ENCODE measurements at regions of chr17 and their contacts with region 1.

Region 1: DNA sequence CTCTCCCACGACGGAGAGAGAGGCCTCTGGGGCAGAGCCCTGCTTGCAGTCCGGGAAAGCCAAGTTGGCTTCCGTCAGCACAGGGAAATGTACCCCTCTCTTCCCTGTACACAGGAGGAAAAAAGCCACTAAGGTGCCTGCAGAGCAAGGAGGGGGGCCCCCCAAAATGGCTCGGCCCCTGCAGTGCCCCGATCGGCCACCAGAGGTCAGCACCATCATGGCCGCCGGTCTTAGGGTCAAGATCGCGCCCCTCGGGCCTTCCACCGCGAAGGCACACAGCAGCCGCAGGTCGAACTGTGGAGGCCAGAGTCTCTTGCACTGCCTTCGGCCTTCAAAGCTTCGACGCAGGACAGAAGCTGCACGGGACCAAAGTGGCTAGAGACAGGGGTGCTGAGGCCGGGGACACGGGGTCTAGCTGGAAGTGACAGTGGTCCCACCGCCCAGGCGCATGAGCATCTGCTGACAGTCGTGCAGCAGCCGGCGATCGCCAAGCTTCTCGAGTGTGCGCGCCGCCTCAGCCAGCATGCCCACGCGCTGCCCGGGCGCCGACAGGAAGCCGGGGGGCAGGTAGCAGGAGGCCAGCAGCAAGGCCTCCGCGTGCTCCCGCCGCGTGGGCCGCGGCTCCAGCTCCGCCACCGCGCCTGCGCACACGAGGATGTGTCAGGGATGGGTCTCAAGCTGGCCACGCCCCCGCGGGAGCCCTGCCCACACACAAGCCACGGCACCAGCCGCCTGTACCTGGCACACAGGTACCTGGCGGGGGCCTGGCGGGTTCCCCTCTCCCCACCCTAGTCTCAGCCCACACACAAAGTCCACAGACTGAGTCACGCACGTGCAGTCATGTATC is 24.4 kb downstream of the SREBF1 start:
- DNase-seq: peak; percentile 45 to 64 (median 61)
- H3K4me3 ChIP-seq: no peak overlapping the region
- H3K27ac ChIP-seq: no peak overlapping the region
- H3K4me1 ChIP-seq: peaks cover 0 to 10% (median 5%) of the 10 kb centered on the region in 4 experiments
- H3K27me3 ChIP-seq: no peaks in the 10 kb centered on the region

Region 2: DNA sequence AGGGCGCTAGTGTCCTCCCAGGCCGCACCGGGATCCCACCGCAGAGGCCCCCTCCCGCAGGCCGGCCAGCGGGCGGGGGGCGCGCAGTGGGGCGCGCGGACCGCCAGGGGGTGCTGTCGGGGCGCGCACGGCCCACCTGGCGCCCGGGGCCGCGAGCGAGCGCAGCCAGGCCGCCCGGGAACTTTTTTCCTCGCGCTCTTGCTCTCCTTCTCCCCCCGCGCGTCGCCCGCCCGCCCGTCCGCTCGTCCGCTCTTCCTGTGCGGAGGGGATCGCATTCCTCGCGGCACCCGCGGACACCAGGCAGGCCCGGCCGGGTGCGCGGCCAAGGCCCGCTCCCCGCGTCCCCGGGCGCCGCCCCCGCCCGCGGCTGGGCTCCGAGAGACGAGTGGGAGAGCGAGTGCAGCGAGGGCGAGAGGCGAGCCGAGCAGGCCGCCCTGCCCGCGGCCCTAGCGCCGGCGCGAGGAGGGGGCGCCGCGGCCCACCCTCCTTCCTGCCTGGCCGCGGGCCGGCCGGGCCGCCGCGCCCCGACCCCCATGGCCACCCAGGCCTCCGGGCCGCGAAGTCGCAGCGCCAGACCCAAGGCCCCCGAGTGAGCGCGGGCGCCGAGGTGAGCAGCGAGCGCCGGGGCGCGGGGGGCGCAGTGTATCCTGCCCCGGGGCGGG is 131.1 kb before region 1 on chr17 and contains the start of gene RAI1:
- CTCF ChIA-PET with region 1: interaction called, 12 read pairs
- POLR2A ChIA-PET with region 1: interaction called, 3 read pairs
- DNase-seq: peak; percentile 73 to 86 (median 83)
- H3K4me3 ChIP-seq: peak within 1 kb of the TSS; percentile 56 to 81 (median 77)
- H3K27ac ChIP-seq: peak within 1 kb of the TSS; percentile 70 to 89
- H3K4me1 ChIP-seq: peaks cover 0 to 57% (median 38%) of the 10 kb centered on the region in 4 experiments
- H3K27me3 ChIP-seq: no peaks in the 10 kb centered on the region

Region 3: DNA sequence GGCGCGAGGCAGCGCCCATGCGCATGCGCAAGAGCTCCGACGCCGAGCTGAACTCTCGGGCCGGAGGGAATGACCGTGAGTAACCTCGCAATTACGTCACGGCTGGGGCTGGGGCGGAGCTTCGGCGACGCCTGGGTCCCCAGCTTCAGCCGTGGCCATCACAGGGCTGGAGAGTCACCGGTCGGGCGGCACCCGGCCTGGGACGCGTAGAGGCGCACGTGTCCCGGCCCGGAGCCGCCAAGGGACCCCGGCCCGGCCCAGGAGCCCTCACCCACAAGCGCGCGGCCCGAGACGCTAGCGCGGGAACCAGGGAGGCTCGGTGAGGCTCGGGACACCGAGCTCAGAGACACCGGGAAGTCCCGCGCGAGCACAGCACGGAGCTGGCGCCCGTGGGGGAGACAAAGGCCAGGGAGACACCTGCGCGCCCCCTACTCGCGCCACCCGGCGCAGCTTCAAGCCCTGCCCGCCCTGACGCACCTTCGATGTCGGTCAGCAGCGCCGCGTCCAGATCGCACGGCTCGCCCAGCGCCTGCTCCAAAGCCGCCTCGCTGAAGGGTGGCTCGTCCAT is 23.9 kb after region 1 on chr17:
- CTCF ChIA-PET with region 1: interaction called, 14 read pairs
- POLR2A ChIA-PET with region 1: interaction called, 6 read pairs
- DNase-seq: peak; percentile 90 to 96 (median 92)
- H3K4me3 ChIP-seq: peak overlapping the region; percentile 62 to 91 (median 85)
- H3K27ac ChIP-seq: peak overlapping the region; percentile 58 to 76
- H3K4me1 ChIP-seq: peaks cover 18 to 73% (median 69%) of the 10 kb centered on the region in 4 experiments
- H3K27me3 ChIP-seq: no peaks in the 10 kb centered on the region

Region 4: GRCh38 chr17:17859909-17860765 is 47.7 kb after region 1 on chr17:
- CTCF ChIA-PET with region 1: interaction called, 295 read pairs
- POLR2A ChIA-PET with region 1: interaction called, 5 read pairs
- DNase-seq: peak; percentile 49 to 66 (median 61)
- H3K4me3 ChIP-seq: no peak overlapping the region
- H3K27ac ChIP-seq: no peak overlapping the region
- H3K4me1 ChIP-seq: peaks cover 0 to 3% (median under 1%) of the 10 kb centered on the region in 4 experiments
- H3K27me3 ChIP-seq: no peaks in the 10 kb centered on the region

Region 5: DNA sequence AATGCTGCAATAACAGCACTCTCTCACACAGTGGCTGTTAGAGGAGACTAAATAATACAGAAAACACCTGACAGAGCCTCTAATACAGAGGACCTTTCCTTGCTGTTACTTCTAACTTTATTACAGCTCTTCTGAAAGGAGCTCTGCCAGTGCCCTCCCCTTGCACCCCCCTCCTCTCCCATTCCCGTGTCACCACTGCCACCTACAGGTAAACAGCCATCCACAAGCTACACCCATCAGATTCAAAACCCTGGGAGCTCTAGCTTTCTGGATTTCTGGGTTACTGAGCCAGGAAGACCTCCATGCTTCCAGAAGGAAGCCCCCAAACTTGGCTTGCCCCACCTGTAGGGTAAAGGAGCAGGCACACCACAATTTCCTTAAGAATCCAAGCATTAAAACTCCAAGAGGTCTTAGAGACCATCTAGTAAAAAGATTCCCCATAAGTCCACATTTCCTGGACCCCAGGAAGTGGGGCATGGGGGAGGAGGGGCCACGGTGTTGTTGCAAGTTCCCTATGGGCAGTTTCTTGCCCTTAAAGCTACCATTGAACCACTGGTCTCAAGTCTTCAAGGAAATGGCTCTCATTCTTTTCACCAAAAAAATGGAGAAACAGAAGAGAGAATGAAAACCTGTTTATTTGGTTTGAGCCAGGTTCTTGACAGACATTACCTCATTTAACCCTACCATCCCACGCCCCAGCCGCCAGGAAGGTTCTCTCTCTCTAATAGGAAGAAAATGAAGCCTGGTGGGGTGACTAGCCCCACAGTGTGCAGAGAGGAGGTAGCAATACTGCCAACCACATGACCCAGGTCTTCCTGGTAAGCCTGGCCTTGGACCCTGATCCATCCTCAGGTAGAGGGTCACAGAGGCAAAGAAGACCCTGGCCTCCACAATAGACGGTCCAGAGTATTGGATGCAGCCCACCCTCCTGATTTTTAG is 107.0 kb after region 1 on chr17:
- CTCF ChIA-PET with region 1: interaction called, 17 read pairs
- POLR2A ChIA-PET with region 1: no interaction called
- DNase-seq: peak; percentile 68 to 84 (median 79)
- H3K4me3 ChIP-seq: no peak overlapping the region
- H3K27ac ChIP-seq: no peak overlapping the region
- H3K4me1 ChIP-seq: peaks cover 5 to 30% (median 10%) of the 10 kb centered on the region in 4 experiments
- H3K27me3 ChIP-seq: no peaks in the 10 kb centered on the region

Region 6: DNA sequence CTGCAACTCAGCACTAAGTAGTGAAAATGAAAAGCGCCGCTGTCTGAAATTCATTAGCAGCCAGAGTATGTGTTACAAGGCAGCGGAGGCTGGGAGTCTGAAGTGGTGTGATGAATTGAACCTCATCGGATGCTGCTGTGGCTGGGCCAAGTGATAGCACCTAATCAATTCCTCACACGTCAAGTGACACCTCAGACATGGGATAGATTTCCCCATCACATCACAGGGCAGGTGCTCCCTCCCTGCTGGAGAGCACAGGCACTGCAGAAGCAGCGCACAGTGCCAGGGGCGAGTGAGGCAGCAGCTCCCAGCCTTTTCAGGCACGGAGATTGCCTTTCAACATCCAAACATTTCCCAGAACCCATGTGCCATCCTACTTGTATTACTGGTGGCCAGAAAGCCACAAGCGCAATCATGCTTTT is 192.5 kb after region 1 on chr17:
- CTCF ChIA-PET with region 1: no interaction called
- POLR2A ChIA-PET with region 1: no interaction called
- DNase-seq: no peak
- H3K4me3 ChIP-seq: no peak overlapping the region
- H3K27ac ChIP-seq: no peak overlapping the region
- H3K4me1 ChIP-seq: no peaks in the 10 kb centered on the region
- H3K27me3 ChIP-seq: no peaks in the 10 kb centered on the region

Measured in common myeloid progenitor, CD34-positive (primary cell).